ENCODE measurements at regions of chr2 and their contacts with region 1.

Region 1: DNA sequence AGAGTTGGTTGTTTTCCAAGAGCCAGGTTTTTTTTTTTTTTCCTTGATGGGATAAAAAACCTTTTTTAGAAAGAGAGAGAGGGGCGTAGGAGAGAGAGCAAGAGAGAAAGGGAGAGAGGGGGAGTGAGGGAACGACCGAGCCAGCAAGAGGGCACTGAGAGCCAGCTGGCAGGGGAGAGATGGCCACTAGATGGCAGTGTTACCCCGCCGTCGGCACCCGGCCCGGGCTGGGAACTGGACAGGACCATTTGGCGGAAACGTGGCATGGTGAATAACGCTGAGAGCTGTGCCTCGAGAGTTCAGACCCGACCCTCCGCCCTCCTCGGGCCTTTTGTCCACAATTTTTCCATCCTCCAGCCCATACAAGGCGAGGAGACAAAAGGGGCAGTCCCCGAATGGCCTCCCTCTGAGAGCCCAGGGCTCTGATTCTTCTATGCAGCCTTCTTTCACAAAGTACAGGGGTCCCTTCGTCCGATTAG is 286.7 kb upstream of the VRK2 start:
- DNase-seq: peak; percentile 68 to 94 (median 90)
- H3K4me3 ChIP-seq: peak overlapping the region; percentile 17 to 76 (median 56)
- H3K27ac ChIP-seq: peak overlapping the region in 53 of 59 donors; percentile 12 to 91 (median 80)
- H3K27me3 ChIP-seq: no peaks in the 10 kb centered on the region
- CTCF ChIP-seq: peak; percentile 91 to 99 (median 96)

Region 2: GRCh38 chr2:57881998-57882884 is 122.4 kb after region 1 on chr2:
- intact Hi-C with region 1: loop called in 1 of 2 experiments (anchors 10 kb)
- DNase-seq: no peak
- H3K4me3 ChIP-seq: peak overlapping the region in 57 of 59 donors; percentile 14 to 70 (median 45)
- H3K27ac ChIP-seq: peak overlapping the region in 55 of 59 donors; percentile 7 to 86 (median 66)
- H3K27me3 ChIP-seq: no peaks in the 10 kb centered on the region
- CTCF ChIP-seq: no peak

Region 3: DNA sequence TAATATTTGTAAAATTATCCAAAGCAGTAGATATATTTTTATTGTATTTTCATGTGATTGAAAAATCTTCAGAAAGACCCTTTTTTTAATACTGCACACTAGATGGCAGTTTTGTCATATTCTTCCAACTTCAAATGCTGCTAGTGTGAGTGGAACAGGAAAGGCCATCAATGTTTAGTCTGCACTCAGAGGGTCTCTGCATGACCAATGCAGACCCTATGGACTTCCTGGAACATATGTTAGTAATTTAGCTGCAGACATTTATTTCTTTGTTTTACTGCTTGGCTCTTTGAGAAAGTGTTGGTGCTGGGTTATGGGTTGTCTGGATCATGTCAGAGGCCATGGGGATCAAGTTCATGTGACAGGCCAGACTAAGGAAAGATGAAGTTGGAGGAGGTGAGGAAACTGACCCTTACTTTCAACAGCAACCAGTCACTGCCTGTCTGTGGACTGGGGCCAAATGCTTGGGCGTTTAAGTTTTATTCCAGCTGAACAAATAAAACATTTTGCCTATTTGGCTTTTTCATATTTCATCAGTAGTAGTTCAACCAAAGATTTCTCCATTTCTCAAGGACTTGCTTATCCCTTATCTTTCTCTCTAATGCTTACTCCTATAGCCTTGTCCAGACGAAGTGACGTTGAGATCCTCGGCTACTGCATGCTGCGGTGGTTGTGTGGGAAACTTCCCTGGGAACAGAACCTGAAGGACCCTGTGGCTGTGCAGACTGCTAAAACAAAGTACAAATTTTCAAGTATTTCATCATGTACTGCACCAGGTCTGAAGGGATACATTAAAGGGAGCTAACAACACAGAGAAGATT is 371.5 kb after region 1 on chr2:
- intact Hi-C with region 1: loop called (anchors 5 to 10 kb)
- DNase-seq: no peak
- H3K4me3 ChIP-seq: no peak overlapping the region
- H3K27ac ChIP-seq: peak overlapping the region in 52 of 59 donors; percentile 5 to 78 (median 57)
- H3K27me3 ChIP-seq: no peaks in the 10 kb centered on the region
- CTCF ChIP-seq: peak in 54 of 56 donors; percentile 30 to 81 (median 60)

Region 4: GRCh38 chr2:58448065-58448507 is 688.2 kb after region 1 on chr2:
- intact Hi-C with region 1: loop called (anchors 2 to 5 kb)
- DNase-seq: peak; percentile 14 to 84 (median 71)
- H3K4me3 ChIP-seq: peak overlapping the region in 3 of 59 donors; percentile 4 to 31 (median 12)
- H3K27ac ChIP-seq: peak overlapping the region in 50 of 59 donors; percentile 5 to 81 (median 67)
- H3K27me3 ChIP-seq: no peaks in the 10 kb centered on the region
- CTCF ChIP-seq: peak; percentile 40 to 97 (median 74)

Region 5: GRCh38 chr2:58553937-58554336 is 794.1 kb after region 1 on chr2:
- intact Hi-C with region 1: loop called in 1 of 2 experiments (anchors 10 kb)
- DNase-seq: peak in 3 of 10 donors; percentile 35 to 64 (median 50)
- H3K4me3 ChIP-seq: no peak overlapping the region
- H3K27ac ChIP-seq: no peak overlapping the region
- H3K27me3 ChIP-seq: peaks cover 0 to 1% (median 0%) of the 10 kb centered on the region in 45 donors
- CTCF ChIP-seq: peak in 52 of 56 donors; percentile 12 to 75 (median 48)

Measured in dorsolateral prefrontal cortex (tissue), 120 donors.